ENCODE measurements at regions of chr6 and their contacts with region 1.

Region 1: DNA sequence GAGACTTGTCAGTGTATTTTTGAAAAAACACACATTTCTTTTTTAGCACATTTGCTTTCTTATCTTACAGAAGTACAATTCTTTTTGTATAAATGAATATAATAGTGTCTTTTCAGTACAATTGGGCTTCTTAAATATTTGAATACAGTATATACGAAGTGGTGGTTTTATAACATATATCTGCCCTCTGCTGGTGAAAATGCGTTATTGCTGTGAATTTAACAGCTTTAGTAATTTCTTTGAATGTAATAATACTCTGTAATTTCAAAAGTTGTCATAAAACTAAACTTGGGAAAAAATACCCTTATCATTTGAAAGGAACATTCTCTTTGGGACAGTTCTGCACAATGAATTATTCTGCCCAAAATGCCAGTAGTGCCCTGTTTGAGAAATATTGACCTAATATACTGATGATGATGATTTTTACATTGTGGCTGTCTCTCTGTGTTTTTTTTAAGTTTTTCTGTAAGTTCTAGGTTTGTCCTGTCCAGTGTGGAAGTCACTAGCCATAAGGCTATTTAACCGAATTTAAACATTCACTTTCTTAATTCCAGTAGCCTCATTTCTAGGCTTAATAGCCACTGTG is 19.0 kb downstream of the SMAP1 start:
- DNase-seq: no peak
- ATAC-seq: no peak

Region 2: GRCh38 chr6:70552974-70553373 is 133.7 kb before region 1 on chr6:
- intact Hi-C with region 1: loop called (anchors 2 kb)
- DNase-seq: no peak
- ATAC-seq: no peak

Region 3: GRCh38 chr6:70566751-70567382 is 119.8 kb before region 1 on chr6 and contains the start of gene SDHAF4:
- intact Hi-C with region 1: loop called (anchors 5 kb)
- DNase-seq: peak; percentile 98
- ATAC-seq: peak; percentile 99
- total RNA-seq, gene SDHAF4: 16.6 TPM

Measured in Right ventricle myocardium inferior (tissue), 1 donor.